Posterior vena cava (tissue), 2 donors: ENCODE measurements at regions of chr11 and their contacts with region 1.

Region 1: GRCh38 chr11:126886636-126887035 is 113.9 kb downstream of the KIRREL3 start:
- DNase-seq: no peak

Region 2: GRCh38 chr11:126318574-126319373 is 567.9 kb before region 1 on chr11:
- intact Hi-C with region 1: loop called in 1 of 2 experiments (anchors 5 kb)
- DNase-seq: no peak